Activated B cell treated with CpG ODN at 0.5 μM for 24 hours (primary cell): ENCODE measurements at regions of chr14 and their contacts with region 1.

Region 1: GRCh38 chr14:89618811-89619551 is 201.9 kb upstream of the FOXN3 start:
- DNase-seq: peak; percentile 69
- ATAC-seq: peak; percentile 73
- H3K4me3 Mint-ChIP-seq: peak overlapping the region; percentile 90
- H3K27ac Mint-ChIP-seq: peak overlapping the region; percentile 86
- H3K4me1 Mint-ChIP-seq: peaks cover 68% of the 10 kb centered on the region
- H3K27me3 Mint-ChIP-seq: no peaks in the 10 kb centered on the region
- CTCF ChIP-seq: no peak

Region 2: GRCh38 chr14:89185919-89186855 is 432.8 kb before region 1 on chr14:
- CTCF ChIA-PET with region 1: no interaction called
- POLR2A ChIA-PET with region 1: no interaction called
- intact Hi-C with region 1: loop called (anchors 5 kb)
- DNase-seq: no peak
- ATAC-seq: no peak
- H3K4me3 Mint-ChIP-seq: peak overlapping the region; percentile 69
- H3K27ac Mint-ChIP-seq: peak overlapping the region; percentile 91
- H3K4me1 Mint-ChIP-seq: peaks cover 41% of the 10 kb centered on the region
- H3K27me3 Mint-ChIP-seq: no peaks in the 10 kb centered on the region
- CTCF ChIP-seq: no peak

Region 3: GRCh38 chr14:89589400-89590118 is 29.4 kb before region 1 on chr14:
- CTCF ChIA-PET with region 1: no interaction called
- POLR2A ChIA-PET with region 1: interaction called, 3 read pairs
- intact Hi-C with region 1: loop called (anchors 2 kb)
- DNase-seq: peak; percentile 24
- ATAC-seq: peak; percentile 84
- H3K4me3 Mint-ChIP-seq: peak overlapping the region; percentile 55
- H3K27ac Mint-ChIP-seq: peak overlapping the region; percentile 85
- H3K4me1 Mint-ChIP-seq: peaks cover 45% of the 10 kb centered on the region
- H3K27me3 Mint-ChIP-seq: no peaks in the 10 kb centered on the region
- CTCF ChIP-seq: no peak

Region 4: GRCh38 chr14:89603938-89604480 is 15.0 kb before region 1 on chr14:
- CTCF ChIA-PET with region 1: no interaction called
- POLR2A ChIA-PET with region 1: interaction called, 15 read pairs
- intact Hi-C with region 1: loop called (anchors 2 kb)
- DNase-seq: no peak
- ATAC-seq: no peak
- H3K4me3 Mint-ChIP-seq: no peak overlapping the region
- H3K27ac Mint-ChIP-seq: no peak overlapping the region
- H3K4me1 Mint-ChIP-seq: peaks cover 15% of the 10 kb centered on the region
- H3K27me3 Mint-ChIP-seq: no peaks in the 10 kb centered on the region
- CTCF ChIP-seq: no peak

Region 5: DNA sequence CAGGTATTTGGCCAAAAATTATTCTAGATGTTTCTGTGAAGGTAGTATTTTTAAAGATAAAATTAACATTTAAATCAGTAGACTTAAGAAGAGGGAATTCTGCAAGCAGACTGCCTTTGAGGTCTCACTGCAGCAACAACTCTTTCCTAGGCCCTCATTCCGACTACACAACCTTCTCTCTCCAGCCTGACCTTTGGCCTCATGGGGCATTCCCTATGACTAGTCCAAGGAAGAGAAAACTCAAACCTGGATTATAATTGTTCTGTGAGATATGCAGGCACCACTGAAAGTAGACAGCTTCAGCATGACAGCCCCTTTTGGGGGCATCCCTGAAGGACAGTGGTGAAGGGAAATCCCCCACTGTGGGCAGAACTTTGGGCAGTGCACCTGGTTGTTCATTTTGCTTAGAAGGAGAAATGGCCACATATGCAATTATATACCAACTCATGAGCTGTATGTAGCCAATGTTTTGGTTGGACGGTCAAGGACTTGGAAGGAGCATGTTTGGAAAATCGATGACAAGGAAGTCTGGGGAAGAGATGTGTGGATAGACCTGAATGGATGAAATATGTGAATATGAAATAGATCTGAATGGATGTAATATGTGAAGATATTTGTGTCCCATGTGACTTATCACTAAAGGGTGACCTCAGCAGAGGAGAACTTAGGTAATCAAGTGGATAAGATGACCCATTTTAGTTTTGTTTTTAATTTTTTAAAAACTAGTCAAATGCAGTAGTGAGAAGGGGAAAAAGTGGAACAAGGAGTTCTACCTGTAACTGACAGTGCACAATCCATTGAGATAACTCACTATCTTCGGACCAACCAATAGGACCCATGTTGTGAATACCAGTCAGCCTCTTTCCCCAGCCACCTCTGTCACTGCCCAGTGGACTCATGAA is 31.3 kb after region 1 on chr14:
- CTCF ChIA-PET with region 1: no interaction called
- POLR2A ChIA-PET with region 1: interaction called, 3 read pairs
- intact Hi-C with region 1: loop called (anchors 5 kb)
- DNase-seq: no peak
- ATAC-seq: peak; percentile 60
- H3K4me3 Mint-ChIP-seq: peak overlapping the region; percentile 3
- H3K27ac Mint-ChIP-seq: peak overlapping the region; percentile 37
- H3K4me1 Mint-ChIP-seq: peaks cover 22% of the 10 kb centered on the region
- H3K27me3 Mint-ChIP-seq: no peaks in the 10 kb centered on the region
- CTCF ChIP-seq: no peak

Region 6: GRCh38 chr14:89701211-89702043 is 82.4 kb after region 1 on chr14:
- CTCF ChIA-PET with region 1: no interaction called
- POLR2A ChIA-PET with region 1: no interaction called
- intact Hi-C with region 1: loop called (anchors 1 kb)
- DNase-seq: peak; percentile 81
- ATAC-seq: peak; percentile 95
- H3K4me3 Mint-ChIP-seq: peak overlapping the region; percentile 77
- H3K27ac Mint-ChIP-seq: peak overlapping the region; percentile 86
- H3K4me1 Mint-ChIP-seq: peaks cover 28% of the 10 kb centered on the region
- H3K27me3 Mint-ChIP-seq: no peaks in the 10 kb centered on the region
- CTCF ChIP-seq: no peak

Region 7: DNA sequence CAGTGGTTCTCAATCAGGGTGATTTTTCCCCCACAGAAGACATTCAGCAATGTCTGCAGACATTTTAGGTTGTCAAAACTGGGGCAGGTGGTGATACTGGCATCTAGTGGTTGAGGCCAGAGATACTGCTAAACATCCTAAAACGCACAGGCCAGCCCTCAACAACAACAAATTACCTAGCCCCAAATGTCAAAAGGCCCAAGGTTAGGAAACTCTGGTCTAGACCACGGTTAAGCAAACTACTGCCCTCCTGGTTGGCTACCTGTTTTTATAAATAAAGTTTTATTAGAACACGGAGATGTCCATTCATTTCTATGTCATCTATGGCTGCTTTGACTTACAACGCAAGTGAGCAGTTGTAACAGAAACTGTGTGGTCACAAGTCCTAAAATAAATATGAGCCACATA is 148.9 kb after region 1 on chr14:
- CTCF ChIA-PET with region 1: interaction called, 3 read pairs
- POLR2A ChIA-PET with region 1: interaction called, 7 read pairs
- intact Hi-C with region 1: loop called (anchors 1 kb)
- DNase-seq: peak; percentile 28
- ATAC-seq: peak; percentile 92
- H3K4me3 Mint-ChIP-seq: no peak overlapping the region
- H3K27ac Mint-ChIP-seq: peak overlapping the region; percentile 67
- H3K4me1 Mint-ChIP-seq: peaks cover 31% of the 10 kb centered on the region
- H3K27me3 Mint-ChIP-seq: no peaks in the 10 kb centered on the region
- CTCF ChIP-seq: peak; percentile 20